Mammary epithelial cell (primary cell): ENCODE measurements at regions of chr6 and their contacts with region 1.

Region 1: DNA sequence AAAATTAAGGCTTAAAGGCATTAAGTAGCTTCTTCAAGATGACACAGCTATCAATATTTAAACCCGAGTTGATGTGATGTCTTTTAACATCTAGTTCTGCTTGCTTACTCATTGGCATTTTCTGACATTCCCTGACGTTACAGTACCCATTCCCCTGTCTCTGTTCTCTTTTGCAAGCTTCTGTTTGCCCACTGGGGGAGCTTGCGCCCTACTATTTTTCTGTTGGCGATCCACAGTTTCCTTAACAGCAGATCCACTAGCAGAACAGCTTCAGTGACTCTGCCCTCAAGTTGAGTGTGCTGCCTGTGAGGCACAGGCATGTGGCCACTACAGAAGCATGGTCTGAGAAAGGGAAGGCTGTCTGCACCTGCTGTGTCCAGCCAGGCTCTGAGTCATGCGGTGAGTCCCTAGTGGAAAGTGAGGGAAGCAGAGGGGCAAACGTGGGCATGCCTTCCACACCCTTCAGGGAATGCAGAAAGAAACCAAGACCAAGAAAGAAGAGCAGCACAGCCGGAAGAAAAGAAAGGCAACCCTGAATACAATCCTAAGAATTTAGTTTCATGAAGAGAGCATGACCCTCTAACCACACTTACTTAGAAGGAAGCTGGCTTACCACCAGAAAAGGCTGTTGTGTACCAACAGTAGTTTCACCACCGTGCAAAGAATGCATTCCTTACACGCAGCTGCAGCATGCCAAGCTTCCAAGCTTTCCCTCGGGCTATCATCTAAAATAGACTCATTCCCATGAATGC is 97.7 kb upstream of the VGLL2 start:
- DNase-seq: peak; percentile 99
- H3K4me3 ChIP-seq: no peak overlapping the region
- H3K27ac ChIP-seq: peak overlapping the region; percentile 69
- H3K4me1 ChIP-seq: peaks cover 38% of the 10 kb centered on the region
- H3K27me3 ChIP-seq: no peaks in the 10 kb centered on the region
- CTCF ChIP-seq: peak; percentile 17 to 35

Region 2: GRCh38 chr6:116210750-116211425 is 956.8 kb before region 1 on chr6:
- CTCF ChIA-PET with region 1: no interaction called
- dilution Hi-C with region 1: no loop called
- in situ Hi-C with region 1: no loop called
- intact Hi-C with region 1: no loop called
- DNase-seq: peak; percentile 91
- H3K4me3 ChIP-seq: peak overlapping the region in 2 of 3 experiments; percentile 17 to 27
- H3K27ac ChIP-seq: peak overlapping the region; percentile 80
- H3K4me1 ChIP-seq: peaks cover 31% of the 10 kb centered on the region
- H3K27me3 ChIP-seq: no peaks in the 10 kb centered on the region
- CTCF ChIP-seq: no peak

Region 3: DNA sequence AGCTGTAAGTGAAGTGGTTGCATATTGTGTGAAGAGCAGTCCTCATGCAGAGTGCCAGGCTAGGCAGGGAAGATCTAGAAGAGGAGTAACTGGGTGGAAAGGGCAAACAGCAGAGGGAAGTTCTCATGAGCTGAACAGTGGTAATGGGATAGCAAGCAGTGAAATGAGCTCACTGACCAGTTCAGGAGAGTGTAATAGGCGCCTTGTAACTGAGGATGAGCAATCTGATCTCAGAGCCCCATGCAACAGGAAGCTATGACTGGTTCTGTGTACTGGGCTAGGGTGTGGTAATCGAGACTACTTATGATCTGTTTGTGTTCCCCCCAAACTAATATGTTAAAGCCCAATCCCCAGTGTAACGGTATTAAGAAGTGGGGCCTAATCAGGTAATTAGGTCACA is 192.1 kb before region 1 on chr6:
- CTCF ChIA-PET with region 1: interaction called, 5 read pairs
- dilution Hi-C with region 1: no loop called
- in situ Hi-C with region 1: loop called in 1 of 2 experiments (anchors 25 kb)
- intact Hi-C with region 1: no loop called
- DNase-seq: peak; percentile 38
- H3K4me3 ChIP-seq: no peak overlapping the region
- H3K27ac ChIP-seq: no peak overlapping the region
- H3K4me1 ChIP-seq: no peaks in the 10 kb centered on the region
- H3K27me3 ChIP-seq: no peaks in the 10 kb centered on the region
- CTCF ChIP-seq: no peak

Region 4: GRCh38 chr6:117118490-117118889 is 49.2 kb before region 1 on chr6:
- CTCF ChIA-PET with region 1: no interaction called
- dilution Hi-C with region 1: loop called (anchors 5 kb)
- in situ Hi-C with region 1: no loop called
- intact Hi-C with region 1: no loop called
- DNase-seq: no peak
- H3K4me3 ChIP-seq: no peak overlapping the region
- H3K27ac ChIP-seq: no peak overlapping the region
- H3K4me1 ChIP-seq: no peaks in the 10 kb centered on the region
- H3K27me3 ChIP-seq: no peaks in the 10 kb centered on the region
- CTCF ChIP-seq: no peak

Region 5: GRCh38 chr6:117145940-117146339 is 21.8 kb before region 1 on chr6:
- CTCF ChIA-PET with region 1: no interaction called
- dilution Hi-C with region 1: no loop called
- in situ Hi-C with region 1: no loop called
- intact Hi-C with region 1: loop called (anchors 2 kb)
- DNase-seq: no peak
- H3K4me3 ChIP-seq: no peak overlapping the region
- H3K27ac ChIP-seq: no peak overlapping the region
- H3K4me1 ChIP-seq: no peaks in the 10 kb centered on the region
- H3K27me3 ChIP-seq: no peaks in the 10 kb centered on the region
- CTCF ChIP-seq: no peak

Region 6: GRCh38 chr6:117188627-117189201 is 21.0 kb after region 1 on chr6:
- CTCF ChIA-PET with region 1: interaction called, 7 read pairs
- dilution Hi-C with region 1: no loop called
- in situ Hi-C with region 1: no loop called
- intact Hi-C with region 1: loop called (anchors 2 kb)
- DNase-seq: no peak
- H3K4me3 ChIP-seq: no peak overlapping the region
- H3K27ac ChIP-seq: no peak overlapping the region
- H3K4me1 ChIP-seq: no peaks in the 10 kb centered on the region
- H3K27me3 ChIP-seq: no peaks in the 10 kb centered on the region
- CTCF ChIP-seq: peak; percentile 70 to 72

Region 7: GRCh38 chr6:117237561-117237960 is 69.9 kb after region 1 on chr6:
- CTCF ChIA-PET with region 1: interaction called, 5 read pairs
- dilution Hi-C with region 1: no loop called
- in situ Hi-C with region 1: no loop called
- intact Hi-C with region 1: loop called (anchors 2 kb)
- DNase-seq: peak; percentile 68
- H3K4me3 ChIP-seq: no peak overlapping the region
- H3K27ac ChIP-seq: peak overlapping the region; percentile 32
- H3K4me1 ChIP-seq: peaks cover 10% of the 10 kb centered on the region
- H3K27me3 ChIP-seq: no peaks in the 10 kb centered on the region
- CTCF ChIP-seq: no peak

Region 8: GRCh38 chr6:117440558-117441525 is 273.1 kb after region 1 on chr6:
- CTCF ChIA-PET with region 1: no interaction called
- dilution Hi-C with region 1: no loop called
- in situ Hi-C with region 1: no loop called
- intact Hi-C with region 1: loop called (anchors 5 kb)
- DNase-seq: peak; percentile 98
- H3K4me3 ChIP-seq: peak overlapping the region in 2 of 3 experiments; percentile 7 to 25
- H3K27ac ChIP-seq: peak overlapping the region; percentile 99
- H3K4me1 ChIP-seq: peaks cover 42% of the 10 kb centered on the region
- H3K27me3 ChIP-seq: no peaks in the 10 kb centered on the region
- CTCF ChIP-seq: no peak